MCF 10A (cell line): ENCODE measurements at regions of chr19 and their contacts with region 1.

Region 1: GRCh38 chr19:41397086-41398049 is at the starts of genes BCKDHA and EXOSC5:
- DNase-seq: peak; percentile 100
- H3K4me3 Mint-ChIP-seq: peak within 1 kb of the TSS; percentile 99
- H3K27ac Mint-ChIP-seq: peak within 1 kb of the TSS; percentile 99
- H3K4me1 Mint-ChIP-seq: peaks cover 29% of the 10 kb centered on the region
- H3K27me3 Mint-ChIP-seq: no peaks in the 10 kb centered on the region
- CTCF ChIP-seq: no peak
- total RNA-seq, gene BCKDHA: 29.1 and 33.6 TPM in 2 replicates
- total RNA-seq, gene EXOSC5: 38.1 and 45.8 TPM in 2 replicates

Region 2: DNA sequence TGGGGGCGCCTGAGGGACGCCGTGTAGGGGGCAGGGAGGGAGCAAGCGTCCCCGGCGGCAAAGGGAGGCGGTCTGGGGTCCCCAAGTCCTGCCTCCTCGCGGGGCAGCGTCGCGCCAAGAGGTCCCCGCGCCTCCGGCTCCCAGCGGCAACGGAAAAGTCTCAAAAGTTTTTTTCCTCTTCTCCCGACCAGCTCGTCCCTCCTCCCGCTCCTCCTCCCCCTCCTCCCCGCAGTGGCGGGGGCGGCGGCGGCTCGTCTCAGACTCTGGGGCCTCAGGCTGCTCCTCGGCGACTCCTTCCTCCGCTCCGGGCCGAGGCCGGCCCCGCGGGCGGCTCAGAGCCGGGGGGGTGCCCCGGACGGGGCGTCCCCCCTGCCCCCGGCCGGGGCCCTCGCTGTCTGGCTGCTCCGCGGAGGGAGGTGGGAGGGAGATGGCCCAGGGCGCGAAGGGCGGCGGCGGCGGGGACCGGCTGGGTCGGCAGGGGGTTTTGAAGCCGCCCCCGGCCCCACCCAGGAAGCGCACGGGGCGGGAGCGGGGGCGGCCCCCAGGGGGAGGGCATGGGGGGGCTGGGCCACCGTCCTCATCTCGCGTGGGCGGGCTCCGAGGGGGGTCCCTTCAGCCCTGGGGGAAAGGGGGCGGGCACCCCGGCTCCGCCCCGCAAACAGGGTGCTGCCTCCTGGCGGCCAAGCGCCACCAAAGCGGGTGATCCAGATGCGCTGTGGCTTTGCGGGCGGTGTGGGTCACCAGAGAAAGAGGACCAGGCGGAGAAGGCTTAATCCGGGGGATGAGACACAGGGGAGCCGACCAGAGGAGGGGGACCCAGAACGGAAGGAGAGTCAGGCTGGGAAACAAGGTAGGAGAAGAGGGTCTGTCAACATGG is 43.7 kb before region 1 on chr19 and contains the start of gene TGFB1:
- CTCF ChIA-PET with region 1: no interaction called
- POLR2A ChIA-PET with region 1: interaction called, 4 read pairs
- intact Hi-C with region 1: loop called (anchors 5 kb)
- DNase-seq: peak; percentile 84
- H3K4me3 Mint-ChIP-seq: peak within 1 kb of the TSS; percentile 98
- H3K27ac Mint-ChIP-seq: no peak within 1 kb of the TSS
- H3K4me1 Mint-ChIP-seq: peaks cover 24% of the 10 kb centered on the region
- H3K27me3 Mint-ChIP-seq: no peaks in the 10 kb centered on the region
- CTCF ChIP-seq: peak; percentile 92
- total RNA-seq, gene TGFB1: 27.8 and 33.7 TPM in 2 replicates

Region 3: DNA sequence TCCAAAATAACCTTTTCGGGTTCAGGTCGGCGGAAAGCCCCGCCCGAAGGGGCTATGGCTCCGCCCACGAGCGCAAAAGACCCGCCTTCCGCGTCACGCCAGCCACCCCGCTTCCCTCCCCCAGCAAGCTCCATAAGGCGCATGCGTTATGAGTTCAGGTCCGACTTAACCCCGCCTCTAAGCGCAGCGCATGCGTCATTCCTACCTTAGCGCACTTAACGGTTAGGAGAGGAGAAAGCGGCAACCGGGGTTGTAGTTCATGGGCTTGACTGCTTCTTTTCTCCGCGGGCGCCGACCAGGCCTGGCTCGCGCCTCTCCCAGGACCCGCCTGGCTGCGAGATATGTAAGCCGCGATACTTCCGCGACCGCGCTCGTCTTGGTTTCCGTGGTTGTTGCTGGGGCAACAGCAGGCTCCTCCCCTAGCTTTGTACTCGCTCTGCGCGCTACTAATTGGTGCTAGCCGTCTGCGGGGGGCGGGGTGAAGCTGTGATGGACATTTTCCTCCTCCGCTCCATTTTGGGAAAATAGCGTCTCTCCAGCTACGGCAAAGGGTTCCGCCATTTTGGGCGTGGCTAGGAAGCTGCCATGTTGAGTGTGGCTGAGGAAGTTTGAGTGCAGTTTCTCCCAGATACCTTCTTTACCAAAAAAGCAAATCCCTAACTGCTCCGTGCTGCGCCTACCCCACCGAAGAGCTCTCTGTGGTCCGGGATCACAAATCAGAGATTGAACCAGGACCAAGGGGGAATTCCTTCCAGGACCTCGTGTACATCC is 33.4 kb before region 1 on chr19 and contains the start of gene B9D2:
- CTCF ChIA-PET with region 1: no interaction called
- POLR2A ChIA-PET with region 1: interaction called, 13 read pairs
- intact Hi-C with region 1: loop called (anchors 1 kb)
- DNase-seq: peak; percentile 99
- H3K4me3 Mint-ChIP-seq: peak within 1 kb of the TSS; percentile 98
- H3K27ac Mint-ChIP-seq: peak within 1 kb of the TSS; percentile 100
- H3K4me1 Mint-ChIP-seq: peaks cover 21% of the 10 kb centered on the region
- H3K27me3 Mint-ChIP-seq: no peaks in the 10 kb centered on the region
- CTCF ChIP-seq: no peak
- total RNA-seq, gene B9D2: 5.5 and 5.7 TPM in 2 replicates

Region 4: GRCh38 chr19:41384351-41384750 is 13.0 kb before region 1 on chr19:
- CTCF ChIA-PET with region 1: interaction called, 11 read pairs
- POLR2A ChIA-PET with region 1: interaction called, 6 read pairs
- intact Hi-C with region 1: no loop called
- DNase-seq: no peak
- H3K4me3 Mint-ChIP-seq: no peak overlapping the region
- H3K27ac Mint-ChIP-seq: no peak overlapping the region
- H3K4me1 Mint-ChIP-seq: peaks cover 18% of the 10 kb centered on the region
- H3K27me3 Mint-ChIP-seq: no peaks in the 10 kb centered on the region
- CTCF ChIP-seq: no peak

Region 5: DNA sequence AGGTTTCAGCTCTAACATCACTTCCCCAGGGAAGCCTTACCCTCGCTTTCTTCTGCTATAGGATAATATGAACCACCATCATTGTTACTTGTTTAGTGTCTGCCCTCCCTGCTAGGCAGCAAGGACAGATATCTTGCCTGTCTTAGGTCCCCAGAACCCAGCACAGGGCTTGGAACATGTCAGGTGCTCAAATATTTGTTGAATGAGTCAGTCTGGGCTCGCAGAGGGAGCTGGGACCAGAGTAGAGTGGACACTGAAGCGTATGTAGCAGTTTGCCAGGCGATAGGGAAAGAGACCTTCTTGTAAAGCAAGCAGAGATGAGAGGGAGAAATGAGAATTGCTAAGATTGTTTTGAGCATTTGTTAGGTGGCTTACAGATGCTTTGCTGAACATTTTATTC is 11.9 kb after region 1 on chr19:
- CTCF ChIA-PET with region 1: interaction called, 3 read pairs
- POLR2A ChIA-PET with region 1: interaction called, 19 read pairs
- intact Hi-C with region 1: no loop called
- DNase-seq: peak; percentile 71
- H3K4me3 Mint-ChIP-seq: peak overlapping the region; percentile 13
- H3K27ac Mint-ChIP-seq: peak overlapping the region; percentile 87
- H3K4me1 Mint-ChIP-seq: peaks cover 19% of the 10 kb centered on the region
- H3K27me3 Mint-ChIP-seq: no peaks in the 10 kb centered on the region
- CTCF ChIP-seq: no peak

Region 6: DNA sequence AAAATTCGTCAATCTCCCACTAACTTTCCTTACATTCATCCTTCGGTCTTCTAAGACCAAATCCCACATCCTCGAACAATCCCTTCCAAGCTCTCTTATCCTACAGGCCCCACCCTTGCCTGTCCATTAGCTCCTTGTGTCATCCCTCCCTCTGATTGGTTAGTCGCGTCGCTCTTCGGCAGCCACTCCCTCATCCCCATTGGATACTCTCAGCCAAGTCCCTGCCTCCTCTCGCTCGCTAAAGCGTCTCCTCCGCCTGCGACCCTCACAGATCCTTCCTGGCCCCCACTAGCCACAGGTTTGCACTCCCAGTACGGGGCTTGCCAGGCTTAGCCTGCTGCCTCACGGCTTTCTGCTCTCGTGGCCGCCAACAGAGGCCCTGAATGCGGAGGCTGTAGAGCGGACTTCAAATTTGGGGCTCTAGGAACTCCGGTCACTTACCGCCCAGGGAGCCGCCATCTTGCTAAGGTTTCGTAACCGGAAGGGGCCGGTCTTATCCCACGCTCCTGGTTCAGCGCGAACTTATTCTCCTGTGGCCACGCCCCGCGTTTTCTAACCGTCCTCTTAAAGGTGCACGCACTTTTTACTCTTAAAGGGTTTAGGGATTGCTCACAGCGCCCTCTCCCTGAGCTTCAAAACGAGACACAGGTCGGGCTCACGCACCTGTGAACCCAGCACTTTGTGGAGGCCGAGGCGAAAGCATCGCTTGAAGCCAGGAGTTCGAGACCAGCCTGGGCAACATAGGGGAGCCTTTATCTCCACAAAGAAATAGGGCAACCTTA is 42.3 kb after region 1 on chr19 and contains the start of gene DMAC2:
- CTCF ChIA-PET with region 1: no interaction called
- POLR2A ChIA-PET with region 1: interaction called, 12 read pairs
- intact Hi-C with region 1: loop called (anchors 1 kb)
- DNase-seq: peak; percentile 100
- H3K4me3 Mint-ChIP-seq: no peak within 1 kb of the TSS
- H3K27ac Mint-ChIP-seq: peak within 1 kb of the TSS; percentile 39
- H3K4me1 Mint-ChIP-seq: peaks cover 13% of the 10 kb centered on the region
- H3K27me3 Mint-ChIP-seq: peaks cover 20% of the 10 kb centered on the region
- CTCF ChIP-seq: peak; percentile 30
- total RNA-seq, gene DMAC2: 27.7 and 34.8 TPM in 2 replicates